ENCODE measurements at regions of chr19 and their contacts with region 1.

Region 1: GRCh38 chr19:50147462-50148423 is 15.3 kb downstream of the IZUMO2 start:
- DNase-seq: peak; percentile 86
- ATAC-seq: peak; percentile 95
- H3K4me3 Mint-ChIP-seq: peak overlapping the region; percentile 72
- H3K27ac Mint-ChIP-seq: no peak overlapping the region
- H3K4me1 Mint-ChIP-seq: no peaks in the 10 kb centered on the region
- H3K27me3 Mint-ChIP-seq: peaks cover 28% of the 10 kb centered on the region
- CTCF ChIP-seq: no peak

Region 2: GRCh38 chr19:50050384-50051224 is 97.1 kb before region 1 on chr19:
- CTCF ChIA-PET with region 1: no interaction called
- POLR2A ChIA-PET with region 1: no interaction called
- DNase-seq: peak; percentile 87
- ATAC-seq: peak; percentile 96
- H3K4me3 Mint-ChIP-seq: peak overlapping the region; percentile 80
- H3K27ac Mint-ChIP-seq: peak overlapping the region; percentile 85
- H3K4me1 Mint-ChIP-seq: peaks cover 10% of the 10 kb centered on the region
- H3K27me3 Mint-ChIP-seq: no peaks in the 10 kb centered on the region; the same call in 1 of the 2 replicates
- CTCF ChIP-seq: no peak

Region 3: DNA sequence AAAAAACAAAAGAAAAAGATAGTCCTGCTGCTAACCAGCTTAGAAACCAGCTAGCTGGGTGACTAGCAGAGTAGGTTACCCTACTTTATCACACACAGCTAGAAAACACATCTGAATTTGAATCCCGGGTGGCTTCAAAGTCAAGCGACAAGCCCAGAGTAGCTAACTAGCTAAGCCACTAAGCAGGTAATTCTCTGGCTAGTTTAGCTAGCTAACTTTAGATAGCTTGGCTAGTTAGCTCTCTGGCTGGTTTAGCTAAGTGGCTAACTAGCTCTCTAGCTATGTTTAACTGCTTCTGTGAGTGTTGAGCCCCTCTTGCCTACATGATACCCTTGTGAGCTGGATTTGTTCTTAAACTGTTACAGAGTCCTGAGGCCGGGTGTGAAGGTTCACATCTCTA is 68.1 kb after region 1 on chr19:
- CTCF ChIA-PET with region 1: no interaction called
- POLR2A ChIA-PET with region 1: no interaction called
- DNase-seq: no peak
- ATAC-seq: no peak
- H3K4me3 Mint-ChIP-seq: no peak overlapping the region
- H3K27ac Mint-ChIP-seq: 0 out of 2 replicates have a peak overlapping the region, but pooled peaks have one; percentile 11
- H3K4me1 Mint-ChIP-seq: peaks cover 11% of the 10 kb centered on the region
- H3K27me3 Mint-ChIP-seq: no peaks in the 10 kb centered on the region
- CTCF ChIP-seq: no peak

Region 4: DNA sequence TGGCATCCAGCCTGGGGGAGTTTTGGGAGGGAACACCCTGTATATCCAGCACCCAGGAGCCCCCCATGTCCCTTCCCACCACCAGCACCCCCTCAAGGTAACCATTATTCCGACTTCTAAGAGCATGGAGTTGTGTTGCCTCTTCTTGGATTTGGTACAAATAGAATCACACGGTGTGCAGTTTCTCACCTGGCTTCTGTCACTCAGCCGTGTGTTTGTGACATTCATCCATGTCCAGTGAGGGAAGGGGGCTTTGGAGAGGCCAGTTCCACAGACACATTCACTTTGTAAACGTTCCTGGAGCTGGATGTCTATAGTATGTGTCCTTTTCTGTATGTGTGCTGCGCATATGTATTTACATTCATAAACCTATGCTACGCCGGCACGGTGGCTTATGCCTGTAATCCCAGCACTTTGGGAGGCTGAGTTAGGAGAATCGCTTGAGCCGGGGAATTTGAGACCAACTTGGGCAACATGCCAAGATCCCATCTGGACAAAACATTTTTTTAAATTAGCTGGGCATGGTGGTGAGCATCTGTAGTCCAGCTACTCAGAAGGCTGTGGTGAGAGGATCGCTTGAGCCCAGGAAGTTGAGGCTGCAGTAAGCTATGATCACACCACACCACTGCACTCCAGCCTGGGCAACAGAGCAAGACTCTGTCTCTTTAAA is 92.3 kb after region 1 on chr19:
- CTCF ChIA-PET with region 1: interaction called, 13 read pairs
- POLR2A ChIA-PET with region 1: no interaction called
- DNase-seq: no peak
- ATAC-seq: no peak
- H3K4me3 Mint-ChIP-seq: no peak overlapping the region
- H3K27ac Mint-ChIP-seq: peak overlapping the region; percentile 49
- H3K4me1 Mint-ChIP-seq: peaks cover 22% of the 10 kb centered on the region
- H3K27me3 Mint-ChIP-seq: no peaks in the 10 kb centered on the region
- CTCF ChIP-seq: no peak

Region 5: GRCh38 chr19:50258918-50259372 is 111.2 kb after region 1 on chr19:
- CTCF ChIA-PET with region 1: interaction called, 19 read pairs
- POLR2A ChIA-PET with region 1: no interaction called
- DNase-seq: peak; percentile 84
- ATAC-seq: peak; percentile 89
- H3K4me3 Mint-ChIP-seq: no peak overlapping the region
- H3K27ac Mint-ChIP-seq: no peak overlapping the region
- H3K4me1 Mint-ChIP-seq: no peaks in the 10 kb centered on the region
- H3K27me3 Mint-ChIP-seq: peaks cover 4% of the 10 kb centered on the region; the same call in 1 of the 2 replicates
- CTCF ChIP-seq: peak; percentile 89

Region 6: DNA sequence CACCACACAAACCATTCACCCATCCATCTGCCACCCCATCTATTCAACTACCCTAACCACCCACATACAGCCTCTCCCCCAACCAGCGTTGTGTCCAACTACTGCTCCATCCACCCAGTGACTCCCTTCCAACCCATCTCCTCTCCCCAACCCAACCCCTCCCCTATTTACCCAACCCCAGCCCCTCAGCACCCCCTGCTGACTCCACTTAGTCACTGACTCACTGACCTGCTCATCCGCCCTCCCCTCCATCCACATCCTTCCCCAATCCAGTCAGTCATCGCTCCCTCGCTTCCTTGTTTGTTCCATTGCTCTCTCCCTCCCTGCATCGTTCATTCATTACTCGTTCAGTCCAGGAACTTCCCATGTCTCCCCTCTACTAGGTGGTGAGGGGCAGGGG is 142.3 kb after region 1 on chr19:
- CTCF ChIA-PET with region 1: interaction called, 11 read pairs
- POLR2A ChIA-PET with region 1: interaction called, 3 read pairs
- DNase-seq: peak; percentile 29
- ATAC-seq: no peak
- H3K4me3 Mint-ChIP-seq: no peak overlapping the region
- H3K27ac Mint-ChIP-seq: no peak overlapping the region
- H3K4me1 Mint-ChIP-seq: peaks cover 26% of the 10 kb centered on the region
- H3K27me3 Mint-ChIP-seq: no peaks in the 10 kb centered on the region; the same call in 1 of the 2 replicates
- CTCF ChIP-seq: no peak

Region 7: DNA sequence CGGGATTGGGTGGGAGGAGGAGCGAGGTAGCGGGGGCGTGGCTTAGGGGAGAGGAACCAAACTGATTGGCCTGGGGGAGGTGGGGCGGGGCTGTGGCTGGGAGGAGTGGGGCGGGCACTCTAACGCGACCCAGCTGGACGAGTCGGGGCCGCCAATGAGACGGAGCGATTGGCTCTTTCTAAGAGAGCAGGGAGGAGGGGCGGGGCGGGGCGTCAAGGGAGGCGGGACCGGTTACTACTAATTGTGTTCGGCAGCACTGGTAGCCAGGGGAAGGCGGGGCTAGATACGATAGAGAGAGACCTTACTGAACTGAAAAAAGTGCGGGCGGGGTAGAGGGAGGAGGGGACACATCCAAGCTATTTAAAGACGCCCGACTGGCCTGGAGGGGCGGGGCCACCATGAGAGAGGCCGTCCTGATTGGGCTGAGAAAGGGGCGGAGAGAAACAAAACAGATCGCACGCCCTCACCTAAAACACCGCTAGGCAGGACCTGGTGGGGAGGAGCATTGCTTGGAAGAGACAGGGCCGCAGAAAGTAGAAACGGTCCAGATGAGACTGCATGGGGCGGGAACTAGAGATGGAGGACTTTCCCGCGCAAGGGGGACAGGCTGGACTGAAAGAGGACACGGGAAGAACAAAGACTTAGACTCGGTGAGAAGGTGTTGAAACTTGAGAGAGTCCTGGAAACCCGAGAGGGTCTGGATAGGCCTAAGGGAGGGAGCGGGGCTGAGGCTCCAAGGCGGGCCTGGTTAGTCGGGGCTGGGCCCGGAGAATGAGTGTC is 181.6 kb after region 1 on chr19 and contains the start of gene KCNC3:
- CTCF ChIA-PET with region 1: interaction called, 10 read pairs
- POLR2A ChIA-PET with region 1: interaction called, 3 read pairs
- DNase-seq: peak; percentile 100
- ATAC-seq: peak; percentile 62
- H3K4me3 Mint-ChIP-seq: peak within 1 kb of the TSS; percentile 85
- H3K27ac Mint-ChIP-seq: peak within 1 kb of the TSS; percentile 98
- H3K4me1 Mint-ChIP-seq: peaks cover 49% of the 10 kb centered on the region
- H3K27me3 Mint-ChIP-seq: peaks cover 38% of the 10 kb centered on the region
- CTCF ChIP-seq: no peak
- total RNA-seq, gene KCNC3: 8.5 to 10.1 TPM (median 10.0 TPM) in 3 replicates

Measured in WTC11 (cell line).